GM10248 (cell line): ENCODE measurements at regions of chr10 and their contacts with region 1.

Region 1: GRCh38 chr10:26725837-26726727 is 28.6 kb downstream of the PDSS1 start:
- DNase-seq: peak; percentile 59
- CTCF ChIP-seq: peak; percentile 71

Region 2: GRCh38 chr10:26334932-26335573 is 391.0 kb before region 1 on chr10:
- CTCF ChIA-PET with region 1: interaction called, 11 read pairs
- POLR2A ChIA-PET with region 1: no interaction called
- DNase-seq: peak; percentile 67
- CTCF ChIP-seq: peak; percentile 77

Region 3: DNA sequence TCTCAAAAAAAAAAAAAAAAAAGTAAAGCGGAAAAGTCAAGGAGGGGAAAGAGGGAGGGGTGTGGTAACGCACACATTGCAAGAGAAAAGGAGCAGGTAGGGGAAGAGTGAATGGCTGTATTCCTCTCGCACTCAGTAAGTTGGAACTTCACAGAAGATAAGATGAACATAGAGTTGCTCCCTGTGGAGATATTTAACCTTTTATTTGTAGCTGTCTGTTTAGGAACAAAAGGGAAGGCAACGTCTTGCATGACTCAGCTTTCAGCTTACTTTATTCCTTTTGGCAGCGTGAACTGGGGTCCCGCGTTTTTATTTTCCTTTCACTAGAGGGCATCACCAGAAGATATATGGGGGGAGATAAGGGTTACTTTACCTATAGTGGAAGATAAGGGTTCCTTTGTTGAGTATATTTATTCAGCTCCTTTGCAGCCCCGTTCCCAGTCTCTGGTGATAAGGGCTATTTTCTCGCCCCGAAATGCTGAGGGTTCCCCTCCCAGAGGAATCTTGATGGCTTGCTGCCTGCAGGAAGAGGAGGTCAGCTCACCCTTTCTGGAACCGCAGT is 209.5 kb before region 1 on chr10:
- CTCF ChIA-PET with region 1: no interaction called
- POLR2A ChIA-PET with region 1: no interaction called
- DNase-seq: no peak
- CTCF ChIP-seq: no peak

Region 4: GRCh38 chr10:26675873-26676257 is 50.2 kb before region 1 on chr10:
- CTCF ChIA-PET with region 1: no interaction called
- POLR2A ChIA-PET with region 1: no interaction called
- DNase-seq: no peak
- CTCF ChIP-seq: no peak

Region 5: DNA sequence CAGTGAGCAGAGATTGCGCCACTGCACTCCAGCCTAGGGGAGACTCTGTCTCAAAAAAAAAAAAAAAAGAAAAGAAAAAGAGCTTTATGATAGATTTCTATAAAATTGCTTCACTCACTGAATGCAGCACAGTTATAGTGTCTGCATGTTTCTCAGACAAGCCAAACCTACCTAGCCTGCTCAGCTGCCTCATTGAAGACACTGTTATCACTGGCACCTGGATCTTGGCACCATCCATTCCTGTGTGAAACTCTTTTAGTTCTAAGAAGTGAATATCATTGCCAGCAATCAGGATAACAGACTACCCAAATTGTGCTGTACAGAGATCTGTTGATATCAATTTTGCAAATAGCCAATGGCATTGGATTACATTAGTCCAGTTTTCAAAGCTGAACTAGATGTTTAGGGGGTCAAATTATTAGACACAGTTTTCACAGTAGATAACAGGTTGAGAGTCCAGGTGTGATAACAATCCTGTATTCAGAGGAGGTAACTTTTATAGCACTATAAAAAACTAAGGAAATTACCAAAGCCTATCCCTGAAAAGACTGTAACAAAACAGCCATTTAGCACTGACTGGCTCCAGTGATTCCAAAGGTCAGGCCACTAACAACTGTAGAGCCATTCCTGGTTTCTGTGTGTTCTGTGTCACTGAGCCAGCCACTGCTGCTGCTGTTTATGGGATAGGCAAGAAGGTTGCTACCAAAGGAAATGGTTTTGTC is 11.5 kb before region 1 on chr10:
- CTCF ChIA-PET with region 1: interaction called, 21 read pairs
- POLR2A ChIA-PET with region 1: interaction called, 5 read pairs
- DNase-seq: no peak
- CTCF ChIP-seq: no peak

Region 6: GRCh38 chr10:26755443-26755903 is 29.4 kb after region 1 on chr10:
- CTCF ChIA-PET with region 1: interaction called, 16 read pairs
- POLR2A ChIA-PET with region 1: no interaction called
- DNase-seq: peak; percentile 52
- CTCF ChIP-seq: no peak

Region 7: GRCh38 chr10:26860443-26861204 is 134.5 kb after region 1 on chr10 and contains the start of gene ABI1:
- CTCF ChIA-PET with region 1: interaction called, 23 read pairs
- POLR2A ChIA-PET with region 1: no interaction called
- DNase-seq: peak; percentile 96
- CTCF ChIP-seq: no peak

Region 8: DNA sequence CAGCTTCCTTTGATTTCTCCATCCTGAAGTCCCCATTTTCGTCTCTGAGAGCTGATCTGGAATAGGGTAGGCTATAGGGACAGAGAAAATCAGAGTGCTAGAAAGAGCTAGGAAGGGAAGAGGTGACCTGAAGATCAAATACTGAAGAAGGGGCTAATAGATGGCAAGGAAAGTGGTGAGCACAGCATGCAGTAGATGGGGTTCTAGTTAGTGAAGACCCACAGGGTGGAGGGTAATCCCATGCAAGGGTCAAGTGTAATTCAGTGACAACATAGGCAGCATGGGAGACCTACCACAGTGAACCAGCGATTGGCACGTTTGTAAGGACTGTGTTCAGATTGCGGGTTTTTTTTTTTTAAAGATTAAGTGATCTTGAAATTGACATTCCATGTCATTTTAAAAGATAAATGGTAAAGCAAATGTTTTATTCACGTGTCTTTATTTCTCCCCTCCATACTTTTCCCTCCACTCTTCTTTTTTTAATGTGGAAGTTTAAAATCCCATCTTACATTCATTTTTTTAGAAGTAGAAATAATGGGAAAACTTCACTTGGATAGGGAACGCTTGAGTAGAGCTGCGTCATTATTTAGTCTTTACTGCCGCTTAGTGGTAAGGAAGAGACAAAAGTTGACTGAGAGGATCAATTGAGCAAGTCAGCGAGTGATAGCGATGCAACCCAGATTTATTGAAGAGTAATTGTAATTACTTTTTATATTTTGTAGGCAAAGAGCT is 155.7 kb after region 1 on chr10:
- CTCF ChIA-PET with region 1: interaction called, 251 read pairs
- POLR2A ChIA-PET with region 1: no interaction called
- DNase-seq: peak; percentile 62
- CTCF ChIP-seq: peak; percentile 68